Lower leg skin (tissue), 4 donors: ENCODE measurements at regions of chr1 and their contacts with region 1.

Region 1: GRCh38 chr1:28591708-28592320 is at the start of gene RAB42:
- DNase-seq: peak in 1 of 2 donors; percentile 89
- H3K4me3 ChIP-seq: peak within 1 kb of the TSS; percentile 19
- CTCF ChIP-seq: no peak
- POLR2A ChIP-seq: no peak
- total RNA-seq, gene RAB42: 1.0 TPM in 1 of 4 donors, not detected in the others

Region 2: GRCh38 chr1:28494737-28495136 is 97.1 kb before region 1 on chr1:
- intact Hi-C with region 1: no loop called
- DNase-seq: no peak
- H3K4me3 ChIP-seq: no peak overlapping the region
- CTCF ChIP-seq: no peak
- POLR2A ChIP-seq: no peak

Region 3: DNA sequence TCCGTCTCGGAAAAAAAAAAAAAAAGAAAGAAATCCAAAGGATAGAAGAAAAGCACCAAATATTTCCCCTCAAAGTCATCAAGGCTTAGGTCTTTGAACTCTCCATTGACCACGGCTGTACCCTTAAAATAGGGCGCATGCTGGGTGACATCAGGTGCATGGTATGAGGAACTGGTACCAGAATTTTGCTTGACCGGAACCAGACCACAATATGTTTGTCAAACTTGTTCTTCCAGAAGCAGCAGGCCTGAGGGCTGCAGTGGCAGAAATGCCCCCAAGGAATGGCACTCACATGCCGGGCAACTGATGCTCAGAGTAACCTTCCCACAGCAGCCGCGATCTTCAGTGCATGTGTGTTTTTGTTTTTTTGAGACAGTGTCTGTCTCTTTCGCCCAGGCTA is 64.9 kb before region 1 on chr1:
- intact Hi-C with region 1: loop called (anchors 10 kb)
- DNase-seq: no peak
- H3K4me3 ChIP-seq: no peak overlapping the region
- CTCF ChIP-seq: no peak
- POLR2A ChIP-seq: no peak